Mammary epithelial cell (primary cell): ENCODE measurements at regions of chr2 and their contacts with region 1.

Region 1: DNA sequence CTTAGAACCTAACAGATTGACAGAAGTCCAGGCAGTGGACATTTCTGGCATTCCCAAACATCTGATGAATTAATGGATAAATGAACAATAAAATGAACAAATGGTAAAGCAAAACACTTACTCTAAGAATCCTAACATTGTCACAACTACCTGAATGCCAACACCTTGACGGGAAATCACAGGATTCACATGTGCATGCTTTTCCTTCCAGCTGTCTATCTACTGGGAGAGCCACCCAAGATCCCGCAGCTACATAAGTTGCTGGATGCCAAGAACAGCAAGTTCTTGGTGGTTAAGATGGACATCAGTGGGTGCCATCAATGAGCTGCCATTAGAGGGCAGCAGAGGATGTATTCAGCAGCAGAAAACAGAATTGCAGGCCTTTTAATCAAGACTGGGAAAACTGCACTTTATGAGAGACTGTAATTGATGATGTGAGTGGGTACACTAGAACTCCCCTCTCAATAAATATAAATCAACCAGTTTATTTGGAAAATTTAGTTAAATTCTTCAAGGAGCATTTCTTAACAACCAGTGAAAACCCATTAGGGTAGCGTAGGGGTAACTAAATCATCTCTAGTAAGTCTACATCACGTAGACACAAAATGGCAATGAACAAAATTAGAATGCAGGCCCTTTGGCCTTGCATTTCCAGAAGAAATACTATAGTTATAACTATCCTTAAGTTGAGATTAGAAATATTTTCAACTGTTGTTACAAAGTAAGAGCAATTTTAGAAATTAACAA is 45.6 kb downstream of the SESTD1 start:
- DNase-seq: peak; percentile 65
- H3K4me3 ChIP-seq: no peak overlapping the region
- H3K27ac ChIP-seq: no peak overlapping the region
- H3K4me1 ChIP-seq: no peaks in the 10 kb centered on the region
- H3K27me3 ChIP-seq: no peaks in the 10 kb centered on the region
- CTCF ChIP-seq: peak; percentile 94 to 98

Region 2: DNA sequence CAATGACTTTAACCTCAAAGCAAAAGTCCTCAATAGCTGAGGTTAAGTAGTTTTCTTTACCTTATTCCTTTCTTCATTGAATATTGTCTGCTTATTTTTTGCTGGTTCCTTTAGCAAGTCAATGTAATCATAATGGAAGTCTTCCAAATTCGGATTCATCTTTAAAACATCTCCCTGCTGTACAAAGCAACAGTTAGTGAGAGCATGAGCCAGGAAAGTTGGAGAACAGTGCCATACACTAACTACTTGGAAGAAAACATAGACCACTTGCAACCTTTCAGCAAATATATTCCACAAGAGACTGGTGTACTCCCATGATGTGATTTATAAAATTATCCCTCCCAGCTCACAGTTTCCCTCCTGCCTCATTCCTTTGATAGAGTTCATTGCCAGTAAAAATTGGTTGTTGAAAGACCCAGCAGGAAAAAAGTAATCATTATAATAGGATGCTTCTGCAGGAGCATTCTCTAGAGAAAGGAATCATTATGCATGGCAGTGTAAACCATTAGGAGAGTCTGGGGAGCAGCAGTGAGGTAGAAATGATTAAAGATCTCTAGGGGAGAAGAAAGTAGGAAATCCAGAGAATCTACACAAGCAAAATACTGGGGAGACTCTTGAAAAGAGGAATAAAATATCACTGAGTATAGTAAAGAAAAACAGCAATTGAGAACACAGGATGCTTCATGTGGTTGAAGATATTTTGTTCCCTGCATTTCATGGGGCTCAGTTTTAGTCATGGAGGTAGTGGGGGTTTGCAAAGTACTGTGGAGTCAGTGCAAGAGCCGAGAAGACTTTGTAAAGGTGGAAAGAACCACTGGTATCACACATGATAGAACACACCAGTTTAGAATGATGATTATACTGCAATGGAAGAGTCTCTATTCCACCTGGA is 373.2 kb before region 1 on chr2:
- CTCF ChIA-PET with region 1: no interaction called
- dilution Hi-C with region 1: no loop called
- in situ Hi-C with region 1: no loop called
- intact Hi-C with region 1: no loop called
- DNase-seq: no peak
- H3K4me3 ChIP-seq: no peak overlapping the region
- H3K27ac ChIP-seq: no peak overlapping the region
- H3K4me1 ChIP-seq: no peaks in the 10 kb centered on the region
- H3K27me3 ChIP-seq: no peaks in the 10 kb centered on the region
- CTCF ChIP-seq: no peak

Region 3: DNA sequence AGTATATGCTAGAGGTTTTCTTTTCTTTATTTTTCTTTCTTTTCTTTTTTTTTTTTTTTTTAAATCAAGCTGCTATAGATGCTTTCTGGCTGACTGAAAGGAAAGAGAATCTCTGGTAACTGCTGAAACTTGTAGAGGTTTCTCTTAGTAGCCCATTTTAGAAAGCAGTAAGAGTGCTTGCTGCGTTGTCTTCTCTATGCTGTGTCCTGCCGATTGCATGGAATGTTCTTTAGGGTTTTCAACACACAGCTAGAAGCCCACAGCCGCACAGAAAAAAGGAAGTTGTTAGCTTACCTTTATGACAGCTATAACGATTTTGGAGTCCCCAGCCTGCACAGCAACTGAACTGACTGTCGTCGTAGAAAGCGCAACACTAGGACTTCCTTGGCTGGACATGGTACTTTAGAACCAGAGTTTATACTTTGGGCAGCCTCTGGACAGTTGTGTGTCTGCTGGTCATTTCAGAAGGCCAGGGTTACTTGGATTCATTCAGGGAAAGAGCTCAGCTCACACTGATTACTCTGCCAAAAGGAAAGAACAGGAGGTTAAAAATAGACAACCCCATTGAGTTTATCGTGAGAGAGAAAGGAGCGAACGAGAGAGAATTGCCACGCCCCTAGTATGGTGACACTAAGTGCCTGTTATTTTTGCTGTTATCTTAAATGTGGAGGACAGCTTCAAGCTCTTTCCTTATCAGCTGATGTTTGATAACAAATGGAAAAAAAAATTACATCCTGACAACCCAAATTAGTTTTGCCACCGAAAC is 169.3 kb before region 1 on chr2 and contains the start of gene CCDC141:
- CTCF ChIA-PET with region 1: no interaction called
- dilution Hi-C with region 1: no loop called
- in situ Hi-C with region 1: no loop called
- intact Hi-C with region 1: no loop called
- DNase-seq: no peak
- H3K4me3 ChIP-seq: no peak within 1 kb of the TSS
- H3K27ac ChIP-seq: no peak within 1 kb of the TSS
- H3K4me1 ChIP-seq: no peaks in the 10 kb centered on the region
- H3K27me3 ChIP-seq: no peaks in the 10 kb centered on the region
- CTCF ChIP-seq: no peak
- total RNA-seq, gene CCDC141: not detected

Region 4: DNA sequence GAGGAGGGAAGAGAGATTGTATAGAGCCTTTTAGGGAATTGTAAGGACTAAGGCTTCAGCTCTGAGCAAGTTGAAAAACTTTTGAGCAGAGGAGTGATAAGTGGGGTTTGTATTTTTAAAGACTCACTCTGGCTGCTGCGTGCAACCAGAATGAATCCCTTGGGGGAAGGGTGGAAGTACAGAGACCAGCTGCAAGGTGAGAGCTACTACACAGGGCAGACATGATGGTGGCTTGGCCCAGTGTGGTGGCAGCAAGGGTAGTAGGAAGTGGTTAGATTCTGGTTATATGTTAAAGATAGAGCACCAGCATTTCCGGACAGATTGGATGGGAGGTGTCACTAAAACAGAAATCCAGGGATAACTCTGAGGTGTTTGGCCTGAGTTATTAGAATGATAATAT is 55.7 kb after region 1 on chr2:
- CTCF ChIA-PET with region 1: no interaction called
- dilution Hi-C with region 1: no loop called
- in situ Hi-C with region 1: no loop called
- intact Hi-C with region 1: loop called (anchors 5 kb)
- DNase-seq: no peak
- H3K4me3 ChIP-seq: no peak overlapping the region
- H3K27ac ChIP-seq: no peak overlapping the region
- H3K4me1 ChIP-seq: peaks cover 34% of the 10 kb centered on the region
- H3K27me3 ChIP-seq: no peaks in the 10 kb centered on the region
- CTCF ChIP-seq: no peak

Region 5: GRCh38 chr2:179410552-179411356 is 191.7 kb after region 1 on chr2:
- CTCF ChIA-PET with region 1: interaction called, 3 read pairs
- dilution Hi-C with region 1: no loop called
- in situ Hi-C with region 1: no loop called
- intact Hi-C with region 1: loop called (anchors 2 kb)
- DNase-seq: peak; percentile 48
- H3K4me3 ChIP-seq: no peak overlapping the region
- H3K27ac ChIP-seq: no peak overlapping the region
- H3K4me1 ChIP-seq: no peaks in the 10 kb centered on the region
- H3K27me3 ChIP-seq: no peaks in the 10 kb centered on the region
- CTCF ChIP-seq: peak; percentile 80 to 84